ENCODE measurements at regions of chr2 and their contacts with region 1.

Region 1: GRCh38 chr2:172442072-172442895 is 14.9 kb downstream of the ITGA6 start:
- DNase-seq: peak; percentile 99
- ATAC-seq: peak; percentile 81
- H3K4me3 ChIP-seq: peak overlapping the region; percentile 47
- H3K27ac ChIP-seq: peak overlapping the region; percentile 97
- H3K4me1 ChIP-seq: peaks cover 77% of the 10 kb centered on the region
- H3K27me3 ChIP-seq: no peaks in the 10 kb centered on the region
- CTCF ChIP-seq: no peak

Region 2: DNA sequence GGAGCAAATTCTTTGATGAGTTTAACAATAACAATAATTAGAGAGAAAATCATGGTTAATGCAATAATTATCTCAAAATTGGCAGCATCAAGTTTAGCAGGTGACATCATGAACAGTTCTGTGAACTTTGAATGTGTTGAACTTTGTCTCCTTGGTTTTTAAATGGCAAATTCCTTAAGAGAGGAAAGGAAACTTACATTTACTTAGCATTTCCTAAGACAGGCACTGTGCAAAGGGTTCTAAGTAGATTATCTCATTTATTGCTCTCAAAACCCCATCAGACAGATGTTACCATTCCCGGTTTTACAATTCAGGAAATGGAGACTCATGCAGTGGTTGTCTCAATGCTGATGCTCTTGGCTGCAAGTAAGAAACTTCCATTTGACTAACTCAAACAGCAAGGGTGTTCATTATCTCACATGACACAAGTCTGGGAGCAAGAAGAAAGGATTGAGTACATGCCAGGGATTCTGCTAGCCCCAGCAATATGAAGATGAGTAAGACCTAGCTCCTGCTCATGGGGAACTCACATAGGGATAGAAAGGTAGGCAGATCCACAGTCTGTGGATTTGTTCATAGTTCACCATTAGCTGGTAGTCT is 96.2 kb before region 1 on chr2:
- CTCF ChIA-PET with region 1: no interaction called
- POLR2A ChIA-PET with region 1: no interaction called
- intact Hi-C with region 1: loop called (anchors 5 kb)
- DNase-seq: peak; percentile 19
- ATAC-seq: peak; percentile 30
- H3K4me3 ChIP-seq: no peak overlapping the region
- H3K27ac ChIP-seq: no peak overlapping the region
- H3K4me1 ChIP-seq: peaks cover 51% of the 10 kb centered on the region
- H3K27me3 ChIP-seq: no peaks in the 10 kb centered on the region
- CTCF ChIP-seq: no peak

Measured in PC-3 (cell line).